MCF 10A (cell line): ENCODE measurements at regions of chr17 and their contacts with region 1.

Region 1: DNA sequence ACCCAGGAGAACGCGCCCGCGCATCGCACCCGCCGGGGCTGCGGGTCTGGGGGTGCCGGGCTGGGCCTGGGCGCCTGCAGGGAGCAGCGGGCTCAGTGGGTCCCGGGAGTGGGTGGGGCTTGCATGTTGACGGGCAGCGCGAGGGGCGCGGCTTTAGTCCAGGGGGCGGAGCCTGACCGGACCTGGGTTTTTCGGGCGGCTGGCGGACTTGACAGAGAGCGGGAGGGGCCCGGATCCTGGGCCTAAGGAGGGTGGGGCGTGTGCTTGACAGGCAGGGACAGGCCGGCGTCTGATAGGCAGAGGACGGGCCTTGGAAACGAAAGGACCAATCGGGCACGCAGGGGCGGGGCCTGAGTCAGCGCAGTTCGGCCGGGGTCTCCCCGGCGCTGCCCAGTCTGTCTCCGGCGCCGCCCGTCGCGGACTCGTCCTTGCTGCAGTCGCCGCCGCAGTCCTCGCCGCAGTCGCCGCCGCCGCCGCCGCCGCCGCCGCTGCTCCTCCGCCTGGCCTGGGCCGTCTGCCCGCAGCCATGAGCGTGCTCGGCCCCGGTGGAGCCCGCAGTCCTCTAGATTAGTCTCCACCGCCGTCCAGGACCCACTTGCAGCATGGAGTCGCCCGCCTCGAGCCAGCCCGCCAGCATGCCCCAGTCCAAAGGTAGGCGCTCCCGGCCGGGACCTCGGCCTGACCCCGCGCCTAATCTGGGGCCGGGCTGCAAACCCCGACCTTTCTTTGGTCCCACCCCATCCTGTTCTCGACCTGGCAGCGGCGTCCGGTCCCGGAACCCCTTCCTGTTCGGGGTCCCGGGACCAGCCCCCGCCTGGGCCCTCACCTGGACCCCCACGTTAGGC is at the start of gene MAP2K3:
- DNase-seq: peak; percentile 99
- H3K4me3 Mint-ChIP-seq: peak within 1 kb of the TSS; percentile 86
- H3K27ac Mint-ChIP-seq: peak within 1 kb of the TSS; percentile 83
- H3K4me1 Mint-ChIP-seq: peaks cover 46% of the 10 kb centered on the region
- H3K27me3 Mint-ChIP-seq: no peaks in the 10 kb centered on the region
- CTCF ChIP-seq: no peak
- total RNA-seq, gene MAP2K3: 25.7 and 45.2 TPM in 2 replicates

Region 2: GRCh38 chr17:21043286-21044232 is 241.0 kb before region 1 on chr17:
- CTCF ChIA-PET with region 1: interaction called, 5 read pairs
- POLR2A ChIA-PET with region 1: interaction called, 27 read pairs
- intact Hi-C with region 1: loop called (anchors 2 kb)
- DNase-seq: peak; percentile 98
- H3K4me3 Mint-ChIP-seq: peak overlapping the region; percentile 94
- H3K27ac Mint-ChIP-seq: no peak overlapping the region
- H3K4me1 Mint-ChIP-seq: peaks cover 6% of the 10 kb centered on the region
- H3K27me3 Mint-ChIP-seq: no peaks in the 10 kb centered on the region
- CTCF ChIP-seq: peak; percentile 92

Region 3: GRCh38 chr17:21126645-21127510 is 157.7 kb before region 1 on chr17 and contains the start of gene DHRS7B:
- CTCF ChIA-PET with region 1: interaction called, 7 read pairs
- POLR2A ChIA-PET with region 1: interaction called, 29 read pairs
- intact Hi-C with region 1: loop called (anchors 1 kb)
- DNase-seq: peak; percentile 98
- H3K4me3 Mint-ChIP-seq: peak within 1 kb of the TSS; percentile 97
- H3K27ac Mint-ChIP-seq: peak within 1 kb of the TSS; percentile 92
- H3K4me1 Mint-ChIP-seq: peaks cover 15% of the 10 kb centered on the region
- H3K27me3 Mint-ChIP-seq: no peaks in the 10 kb centered on the region
- CTCF ChIP-seq: no peak
- total RNA-seq, gene DHRS7B: 18.0 and 21.6 TPM in 2 replicates

Region 4: GRCh38 chr17:21252796-21253645 is 31.5 kb before region 1 on chr17 and contains the start of gene NATD1:
- CTCF ChIA-PET with region 1: interaction called, 7 read pairs
- POLR2A ChIA-PET with region 1: interaction called, 17 read pairs
- intact Hi-C with region 1: no loop called
- DNase-seq: peak; percentile 74
- H3K4me3 Mint-ChIP-seq: peak within 1 kb of the TSS; percentile 70
- H3K27ac Mint-ChIP-seq: no peak within 1 kb of the TSS
- H3K4me1 Mint-ChIP-seq: peaks cover 17% of the 10 kb centered on the region
- H3K27me3 Mint-ChIP-seq: no peaks in the 10 kb centered on the region
- CTCF ChIP-seq: no peak
- total RNA-seq, gene NATD1: 2.3 and 2.5 TPM in 2 replicates

Region 5: DNA sequence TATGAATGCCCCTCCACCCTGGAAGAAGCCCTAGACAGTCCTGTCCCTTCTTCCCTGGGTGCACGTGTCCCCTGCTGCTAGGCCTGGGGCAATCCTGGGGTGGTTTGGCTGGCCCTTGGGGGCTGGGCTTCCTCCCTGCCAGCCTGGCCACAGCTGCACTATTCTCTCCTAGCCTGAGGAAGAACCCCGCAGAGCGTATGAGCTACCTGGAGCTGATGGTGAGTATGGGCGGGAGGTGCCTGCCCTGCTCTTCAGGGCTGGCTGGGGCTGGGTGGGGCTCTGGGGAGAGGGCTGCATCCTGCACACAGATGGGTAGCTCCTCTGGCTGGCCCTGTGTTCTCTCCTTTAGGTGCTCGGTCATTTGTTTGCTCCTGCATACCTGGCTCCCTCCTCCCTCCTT is 28.8 kb after region 1 on chr17:
- CTCF ChIA-PET with region 1: no interaction called
- POLR2A ChIA-PET with region 1: no interaction called
- intact Hi-C with region 1: no loop called
- DNase-seq: no peak
- H3K4me3 Mint-ChIP-seq: no peak overlapping the region
- H3K27ac Mint-ChIP-seq: no peak overlapping the region
- H3K4me1 Mint-ChIP-seq: no peaks in the 10 kb centered on the region
- H3K27me3 Mint-ChIP-seq: no peaks in the 10 kb centered on the region
- CTCF ChIP-seq: no peak

Region 6: GRCh38 chr17:21370430-21370829 is 85.9 kb after region 1 on chr17:
- CTCF ChIA-PET with region 1: no interaction called
- POLR2A ChIA-PET with region 1: no interaction called
- intact Hi-C with region 1: no loop called
- DNase-seq: no peak
- H3K4me3 Mint-ChIP-seq: no peak overlapping the region
- H3K27ac Mint-ChIP-seq: no peak overlapping the region
- H3K4me1 Mint-ChIP-seq: peaks cover 6% of the 10 kb centered on the region
- H3K27me3 Mint-ChIP-seq: no peaks in the 10 kb centered on the region
- CTCF ChIP-seq: no peak

Region 7: GRCh38 chr17:21551081-21551881 is 266.7 kb after region 1 on chr17:
- CTCF ChIA-PET with region 1: no interaction called
- POLR2A ChIA-PET with region 1: interaction called, 12 read pairs
- intact Hi-C with region 1: no loop called
- DNase-seq: peak; percentile 77
- H3K4me3 Mint-ChIP-seq: peak overlapping the region; percentile 79
- H3K27ac Mint-ChIP-seq: no peak overlapping the region
- H3K4me1 Mint-ChIP-seq: peaks cover 19% of the 10 kb centered on the region
- H3K27me3 Mint-ChIP-seq: peaks cover 10% of the 10 kb centered on the region
- CTCF ChIP-seq: no peak